ENCODE measurements at regions of chr22 and their contacts with region 1.

Region 1: GRCh38 chr22:37608477-37609239 is at the start of gene GGA1:
- DNase-seq: peak; percentile 99
- H3K4me3 ChIP-seq: peak within 1 kb of the TSS; percentile 46 to 83 (median 73)
- H3K27ac ChIP-seq: peak within 1 kb of the TSS; percentile 79
- H3K4me1 ChIP-seq: peaks cover 19% of the 10 kb centered on the region
- H3K27me3 ChIP-seq: peaks cover 0 to 7% of the 10 kb centered on the region in 2 experiments
- CTCF ChIP-seq: no peak
- POLR2A ChIP-seq: no peak
- total RNA-seq, gene GGA1: 55.9 and 67.5 TPM in 2 replicates

Region 2: DNA sequence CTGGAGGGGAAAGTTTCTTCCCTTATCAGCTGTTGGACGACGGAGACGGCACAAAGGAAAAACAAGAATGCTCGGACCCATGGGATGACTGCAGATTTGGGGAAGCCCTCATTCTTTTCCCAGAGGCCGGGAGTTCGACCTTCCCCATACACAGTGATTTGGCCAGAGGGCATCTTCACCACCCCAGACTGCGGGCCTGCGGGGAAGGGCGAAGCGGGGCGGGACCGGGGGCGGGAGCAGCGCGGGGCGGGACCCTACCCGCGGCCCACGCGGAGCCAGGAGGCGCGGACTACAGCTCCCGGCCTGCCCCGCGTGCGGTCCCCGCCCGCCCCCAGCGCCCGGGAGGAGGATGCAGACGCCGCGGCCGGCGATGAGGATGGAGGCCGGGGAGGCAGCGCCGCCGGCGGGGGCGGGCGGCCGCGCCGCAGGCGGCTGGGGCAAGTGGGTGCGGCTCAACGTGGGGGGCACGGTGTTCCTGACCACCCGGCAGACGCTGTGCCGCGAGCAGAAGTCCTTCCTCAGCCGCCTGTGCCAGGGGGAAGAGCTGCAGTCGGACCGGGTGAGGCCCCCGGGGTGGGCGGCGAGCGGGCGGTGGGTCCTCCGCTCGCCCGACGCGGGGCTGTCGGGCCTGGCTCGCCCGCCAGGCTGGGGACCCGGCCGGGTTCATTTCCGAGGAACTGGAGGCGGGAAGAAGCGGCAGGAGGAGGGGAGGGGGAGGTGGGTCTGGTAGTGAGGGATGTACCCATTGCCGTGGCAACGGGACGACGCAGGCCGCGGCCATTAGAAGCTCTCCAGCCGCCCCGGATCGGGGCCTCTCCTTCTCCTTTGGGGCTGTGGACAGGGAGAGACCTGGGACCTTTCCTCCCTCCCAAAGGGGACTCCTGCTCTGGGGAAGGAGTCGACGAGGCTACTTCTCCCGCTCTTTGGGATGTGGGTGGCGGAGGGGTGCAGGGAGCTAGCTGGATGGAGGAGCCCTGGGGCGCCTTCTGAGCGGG is 557.0 kb before region 1 on chr22 and contains the start of gene KCTD17:
- CTCF ChIA-PET with region 1: no interaction called
- POLR2A ChIA-PET with region 1: no interaction called
- dilution Hi-C with region 1: no loop called
- intact Hi-C with region 1: no loop called
- DNase-seq: peak; percentile 64
- H3K4me3 ChIP-seq: peak within 1 kb of the TSS; percentile 44 to 75 (median 46)
- H3K27ac ChIP-seq: peak within 1 kb of the TSS; percentile 8
- H3K4me1 ChIP-seq: peaks cover 7% of the 10 kb centered on the region
- H3K27me3 ChIP-seq: no peaks in the 10 kb centered on the region
- CTCF ChIP-seq: no peak
- POLR2A ChIP-seq: peak; percentile 69
- total RNA-seq, gene KCTD17: 48.0 and 59.2 TPM in 2 replicates

Region 3: DNA sequence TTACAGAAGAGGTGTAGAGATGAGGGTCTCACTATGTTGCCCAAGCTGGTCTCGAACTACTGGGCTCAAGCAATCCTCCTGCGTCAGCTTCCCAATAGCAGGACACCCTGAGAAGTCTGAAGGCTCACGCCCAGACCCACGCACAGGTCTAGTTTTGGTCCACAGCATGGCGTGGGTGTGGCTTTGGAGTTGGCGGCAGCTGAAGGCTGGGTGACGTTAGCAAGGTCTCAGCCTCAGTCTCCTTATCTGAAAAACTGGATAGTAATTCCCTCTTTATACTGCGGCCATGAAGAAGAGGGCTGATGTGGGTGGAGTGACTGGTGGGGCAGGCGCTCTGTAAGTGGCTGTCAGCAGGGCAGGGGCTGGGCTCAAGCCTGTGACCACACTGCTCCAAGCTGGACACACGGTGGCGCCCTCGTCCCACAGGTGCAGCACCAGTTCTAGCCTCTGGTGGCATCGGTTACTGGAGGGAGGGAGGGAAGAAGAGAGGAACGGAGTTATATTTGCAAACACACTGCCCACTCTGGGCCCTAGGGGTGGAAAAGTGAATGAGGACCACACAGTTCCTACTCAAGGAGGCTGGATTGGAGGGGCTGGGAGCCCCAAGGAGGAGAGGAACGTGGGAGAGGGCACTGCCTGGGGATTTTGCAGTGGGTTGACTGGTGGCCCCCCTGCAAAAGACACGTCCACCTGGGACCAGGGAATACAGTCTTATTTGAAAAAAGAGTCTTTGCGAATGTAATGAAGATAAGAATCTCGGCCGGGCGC is 69.9 kb before region 1 on chr22:
- CTCF ChIA-PET with region 1: interaction called, 32 read pairs
- POLR2A ChIA-PET with region 1: no interaction called
- dilution Hi-C with region 1: no loop called
- intact Hi-C with region 1: loop called (anchors 1 kb)
- DNase-seq: peak; percentile 91
- H3K4me3 ChIP-seq: no peak overlapping the region
- H3K27ac ChIP-seq: no peak overlapping the region
- H3K4me1 ChIP-seq: peaks cover 3% of the 10 kb centered on the region
- H3K27me3 ChIP-seq: no peaks in the 10 kb centered on the region
- CTCF ChIP-seq: peak; percentile 95 to 98
- POLR2A ChIP-seq: no peak

Region 4: GRCh38 chr22:37561212-37562048 is 47.2 kb before region 1 on chr22:
- CTCF ChIA-PET with region 1: interaction called, 24 read pairs
- POLR2A ChIA-PET with region 1: no interaction called
- dilution Hi-C with region 1: no loop called
- intact Hi-C with region 1: loop called (anchors 1 kb)
- DNase-seq: peak; percentile 88
- H3K4me3 ChIP-seq: peak overlapping the region; percentile 71 to 86 (median 74)
- H3K27ac ChIP-seq: peak overlapping the region; percentile 99
- H3K4me1 ChIP-seq: peaks cover 61% of the 10 kb centered on the region
- H3K27me3 ChIP-seq: no peaks in the 10 kb centered on the region
- CTCF ChIP-seq: peak; percentile 94
- POLR2A ChIP-seq: peak; percentile 47

Region 5: GRCh38 chr22:37633625-37634416 is 25.2 kb after region 1 on chr22:
- CTCF ChIA-PET with region 1: interaction called, 16 read pairs
- POLR2A ChIA-PET with region 1: no interaction called
- dilution Hi-C with region 1: no loop called
- intact Hi-C with region 1: loop called (anchors 2 kb)
- DNase-seq: peak; percentile 72
- H3K4me3 ChIP-seq: no peak overlapping the region
- H3K27ac ChIP-seq: peak overlapping the region; percentile 72
- H3K4me1 ChIP-seq: peaks cover 17% of the 10 kb centered on the region
- H3K27me3 ChIP-seq: no peaks in the 10 kb centered on the region
- CTCF ChIP-seq: peak in 1 of 2 donors; percentile 44
- POLR2A ChIP-seq: no peak

Region 6: DNA sequence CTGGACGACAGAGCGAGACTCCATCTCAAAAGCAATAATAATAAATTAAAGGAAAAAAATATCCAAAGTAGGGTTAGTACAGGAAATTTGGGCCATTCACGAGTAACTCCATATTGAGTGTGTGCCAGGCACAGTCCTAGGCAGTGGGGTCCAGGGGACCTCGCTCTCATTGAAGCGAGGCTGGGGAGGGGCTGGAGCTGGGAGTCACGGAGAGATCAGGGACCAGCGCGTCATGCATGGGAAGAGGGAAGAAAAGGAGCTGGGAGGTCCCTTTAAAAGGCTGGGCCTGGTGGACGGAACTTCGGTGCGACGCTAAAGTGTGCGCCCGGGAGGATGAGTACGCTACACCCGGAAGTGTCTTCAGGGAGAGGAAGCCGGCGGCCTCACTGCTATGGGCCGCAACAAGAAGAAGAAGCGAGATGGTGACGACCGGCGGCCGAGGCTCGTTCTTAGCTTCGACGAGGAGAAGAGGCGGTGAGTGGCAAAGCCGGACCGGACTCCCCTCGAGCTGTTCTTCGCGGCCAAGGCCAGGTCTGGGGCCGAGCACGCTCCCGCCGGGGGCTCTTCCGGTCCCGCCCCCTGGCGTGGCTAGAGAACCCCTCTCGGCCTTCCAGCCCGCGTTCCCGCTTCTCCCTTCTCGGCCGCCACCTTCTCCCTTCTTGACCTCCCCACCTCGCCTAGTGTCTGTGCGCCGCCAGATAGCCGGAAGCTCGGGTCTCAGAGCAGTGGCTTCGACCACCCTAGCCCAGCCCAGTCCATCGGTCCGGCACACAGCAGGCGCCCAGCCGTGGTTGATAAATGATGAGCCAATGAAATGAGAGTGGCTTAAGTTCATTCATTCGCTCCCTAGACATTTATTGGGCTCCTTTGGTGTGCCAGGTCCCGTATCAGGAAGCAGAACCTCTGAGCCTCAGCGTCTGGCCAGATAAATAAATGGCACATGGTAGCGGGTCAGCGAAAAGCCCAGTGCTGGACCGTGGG is 77.6 kb after region 1 on chr22 and contains the start of gene NOL12:
- CTCF ChIA-PET with region 1: interaction called, 13 read pairs
- POLR2A ChIA-PET with region 1: no interaction called
- dilution Hi-C with region 1: no loop called
- intact Hi-C with region 1: loop called (anchors 1 kb)
- DNase-seq: peak; percentile 92
- H3K4me3 ChIP-seq: peak within 1 kb of the TSS; percentile 44 to 99 (median 82)
- H3K27ac ChIP-seq: peak within 1 kb of the TSS; percentile 74
- H3K4me1 ChIP-seq: peaks cover 5% of the 10 kb centered on the region
- H3K27me3 ChIP-seq: no peaks in the 10 kb centered on the region
- CTCF ChIP-seq: no peak
- POLR2A ChIP-seq: peak; percentile 90
- total RNA-seq, gene NOL12: 29.1 and 31.5 TPM in 2 replicates